ENCODE measurements at regions of chr4 and their contacts with region 1.

Region 1: DNA sequence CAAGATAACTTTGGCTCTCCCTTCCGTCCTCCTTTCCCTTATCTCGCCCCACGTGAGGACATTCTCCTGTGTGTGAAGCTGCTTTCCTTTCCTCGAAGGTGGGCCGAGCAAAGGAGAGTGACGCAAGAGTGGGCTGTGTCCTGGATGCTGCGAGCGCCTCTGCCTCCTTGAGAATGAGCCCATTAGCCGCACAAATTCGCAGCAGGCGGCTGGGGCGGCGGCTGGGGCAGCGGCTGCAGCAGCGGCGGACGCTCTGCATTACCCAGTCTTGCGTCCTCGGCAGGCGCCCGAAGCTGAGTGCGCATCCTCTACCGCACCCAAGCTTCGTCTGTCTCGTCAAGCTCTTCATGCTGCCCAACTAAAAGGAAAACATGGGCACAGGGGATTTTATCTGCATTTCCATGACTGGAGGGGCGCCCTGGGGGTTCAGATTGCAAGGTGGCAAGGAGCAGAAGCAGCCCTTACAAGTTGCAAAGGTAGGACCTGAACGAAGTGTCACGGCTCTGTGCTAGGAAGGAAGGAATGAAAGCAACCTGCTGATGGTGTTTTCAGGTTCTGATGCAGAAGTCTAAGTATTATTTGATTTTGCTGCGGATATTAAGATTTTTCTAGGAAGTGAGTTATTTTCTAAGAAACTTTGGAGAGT is at the start of gene SYNPO2:
- DNase-seq: peak; percentile 54
- H3K4me3 ChIP-seq: peak within 1 kb of the TSS; percentile 67
- H3K27ac ChIP-seq: no peak within 1 kb of the TSS
- H3K27me3 ChIP-seq: no peaks in the 10 kb centered on the region
- CTCF ChIP-seq: no peak
- polyA plus RNA-seq, gene SYNPO2: 4.8 and 5.1 TPM in 2 replicates

Region 2: DNA sequence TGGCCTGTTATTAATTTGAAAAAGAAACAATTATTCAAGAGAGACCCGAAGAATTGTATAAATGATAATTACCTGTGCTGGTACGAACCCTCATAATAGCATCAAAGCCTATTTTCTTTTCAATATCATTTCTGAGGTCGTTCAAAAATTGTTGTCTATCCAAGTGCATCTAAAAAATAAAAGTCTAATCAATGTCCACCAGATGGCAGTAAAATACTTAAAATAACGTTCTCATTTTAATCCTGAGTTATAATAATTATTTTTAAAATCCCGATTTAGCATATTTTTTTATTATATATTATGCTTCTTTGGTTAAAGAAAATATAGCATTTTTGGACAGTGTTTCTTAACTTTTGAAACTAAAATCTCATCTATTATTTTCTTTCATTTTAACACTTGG is 147.9 kb before region 1 on chr4:
- CTCF ChIA-PET with region 1: interaction called, 18 read pairs
- POLR2A ChIA-PET with region 1: no interaction called
- DNase-seq: no peak
- H3K4me3 ChIP-seq: no peak overlapping the region
- H3K27ac ChIP-seq: no peak overlapping the region
- H3K27me3 ChIP-seq: no peaks in the 10 kb centered on the region
- CTCF ChIP-seq: peak; percentile 23; the same call in 1 of the 2 replicates

Region 3: DNA sequence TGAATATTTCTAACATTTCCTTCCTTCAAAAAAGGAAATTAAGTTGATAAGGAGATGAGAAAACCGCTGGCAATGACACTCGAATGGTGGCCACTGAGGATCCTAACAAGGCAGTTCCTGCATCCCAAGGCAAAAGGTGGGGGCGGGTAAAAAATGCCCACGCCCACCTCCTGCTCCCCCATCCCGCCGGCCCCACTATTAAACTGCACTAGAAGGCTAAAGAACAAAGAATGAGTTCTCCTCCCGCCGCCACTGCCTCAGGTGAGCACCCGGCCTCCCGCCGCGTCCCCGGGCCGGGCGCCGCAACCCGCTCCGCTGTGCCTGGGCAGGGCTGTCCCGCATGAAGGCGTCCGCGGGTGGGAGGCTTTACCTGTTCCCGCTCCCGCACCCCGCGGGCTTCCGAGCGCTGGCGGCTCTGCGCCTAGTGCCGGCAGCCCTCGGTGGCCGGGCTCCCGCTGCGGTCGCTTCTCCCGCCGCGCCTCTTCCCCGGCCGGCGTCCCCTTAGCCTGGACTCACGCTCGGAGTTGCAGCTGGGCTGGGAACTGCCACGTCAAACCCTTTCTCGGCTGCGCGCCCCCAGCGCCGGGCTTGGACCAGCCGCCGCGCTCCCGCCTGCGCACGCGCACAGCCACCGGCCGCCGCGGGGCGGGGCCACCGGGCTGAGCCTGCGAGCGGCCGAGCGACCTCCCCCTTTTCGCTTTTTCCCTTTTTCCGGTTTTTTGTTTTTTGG is 53.1 kb before region 1 on chr4 and contains the start of gene SEC24D:
- CTCF ChIA-PET with region 1: interaction called, 3 read pairs
- POLR2A ChIA-PET with region 1: interaction called, 12 read pairs
- DNase-seq: peak; percentile 62
- H3K4me3 ChIP-seq: peak within 1 kb of the TSS; percentile 97
- H3K27ac ChIP-seq: peak within 1 kb of the TSS; percentile 99
- H3K27me3 ChIP-seq: no peaks in the 10 kb centered on the region
- CTCF ChIP-seq: no peak
- polyA plus RNA-seq, gene SEC24D: 113 and 154 TPM in 2 replicates

Region 4: GRCh38 chr4:118911238-118911703 is 22.5 kb after region 1 on chr4:
- CTCF ChIA-PET with region 1: interaction called, 10 read pairs
- POLR2A ChIA-PET with region 1: no interaction called
- DNase-seq: no peak
- H3K4me3 ChIP-seq: no peak overlapping the region
- H3K27ac ChIP-seq: no peak overlapping the region
- H3K27me3 ChIP-seq: no peaks in the 10 kb centered on the region
- CTCF ChIP-seq: no peak

Region 5: DNA sequence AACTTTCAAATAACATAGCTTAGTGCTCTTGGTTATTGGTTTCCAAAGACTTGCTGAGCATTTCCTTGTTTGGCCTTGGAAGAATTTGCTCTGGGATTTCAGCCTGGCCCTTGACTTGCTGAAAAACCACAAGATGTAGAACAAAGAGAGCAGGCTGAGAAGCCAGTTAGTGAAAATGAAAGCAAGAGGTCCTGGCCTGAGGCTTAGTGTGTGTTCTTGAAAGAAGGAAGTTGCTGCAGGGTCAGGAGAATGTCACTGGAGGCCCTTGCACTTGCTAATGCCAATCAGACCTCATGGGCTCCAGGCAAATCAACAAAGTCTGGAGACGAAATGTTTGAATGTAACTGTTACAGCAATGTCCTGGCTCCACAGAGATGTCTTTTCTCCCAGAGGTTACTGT is 79.2 kb after region 1 on chr4:
- CTCF ChIA-PET with region 1: interaction called, 31 read pairs
- POLR2A ChIA-PET with region 1: interaction called, 4 read pairs
- DNase-seq: no peak
- H3K4me3 ChIP-seq: peak overlapping the region; percentile 23
- H3K27ac ChIP-seq: peak overlapping the region; percentile 88
- H3K27me3 ChIP-seq: no peaks in the 10 kb centered on the region
- CTCF ChIP-seq: no peak

Measured in AG04450 (cell line).